AG04449 (cell line): ENCODE measurements at regions of chr17 and their contacts with region 1.

Region 1: GRCh38 chr17:7435221-7435675 is at the start of gene TMEM102:
- DNase-seq: peak; percentile 40
- H3K4me3 ChIP-seq: peak within 1 kb of the TSS; percentile 56
- CTCF ChIP-seq: no peak

Region 2: DNA sequence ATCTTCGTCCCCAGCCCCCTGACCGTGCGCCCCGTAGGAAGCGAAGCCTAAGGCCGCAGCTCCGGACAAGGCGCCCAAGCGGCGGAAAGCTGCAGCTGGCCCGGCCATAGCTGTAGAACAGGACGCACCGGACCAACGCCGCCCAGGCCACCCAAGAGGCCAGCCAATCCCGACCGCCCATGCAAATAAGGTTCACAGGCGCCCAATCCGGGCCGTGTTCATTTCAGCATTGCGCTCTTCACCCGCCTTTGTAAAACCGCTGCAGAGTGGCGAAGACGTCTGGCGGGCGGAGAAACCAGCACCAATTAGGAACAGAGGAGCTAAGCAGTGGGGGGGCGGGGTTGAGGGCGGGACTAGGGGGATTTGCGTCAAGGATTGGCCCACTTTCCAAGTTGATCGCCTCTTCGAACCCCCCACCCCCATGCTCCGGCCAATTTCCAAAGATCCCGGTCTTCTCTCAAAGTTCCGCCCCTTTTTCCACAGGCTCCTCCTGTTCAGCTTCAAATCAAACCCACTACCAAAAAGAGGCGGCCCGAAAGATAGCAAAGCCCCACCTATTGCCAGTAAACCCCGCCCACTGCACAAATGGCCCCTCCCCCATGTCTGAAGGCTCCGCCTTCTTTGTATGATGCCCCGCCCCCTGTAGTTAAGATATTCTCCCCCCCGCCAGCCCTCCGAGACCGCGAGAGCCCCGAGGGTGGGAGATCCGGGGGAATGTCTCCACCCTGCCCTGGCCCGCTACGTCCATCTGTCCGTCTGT is 31.1 kb before region 1 on chr17 and contains the start of gene TMEM256:
- CTCF ChIA-PET with region 1: interaction called, 12 read pairs
- POLR2A ChIA-PET with region 1: interaction called, 6 read pairs
- DNase-seq: peak; percentile 96
- H3K4me3 ChIP-seq: peak within 1 kb of the TSS; percentile 83
- CTCF ChIP-seq: no peak

Region 3: GRCh38 chr17:7419819-7420610 is 15.2 kb before region 1 on chr17 and contains the start of gene SPEM1:
- CTCF ChIA-PET with region 1: interaction called, 10 read pairs
- POLR2A ChIA-PET with region 1: no interaction called
- DNase-seq: no peak
- H3K4me3 ChIP-seq: no peak within 1 kb of the TSS
- CTCF ChIP-seq: no peak

Region 4: GRCh38 chr17:7478276-7479153 is 43.3 kb after region 1 on chr17:
- CTCF ChIA-PET with region 1: interaction called, 13 read pairs
- POLR2A ChIA-PET with region 1: interaction called, 19 read pairs
- DNase-seq: no peak
- H3K4me3 ChIP-seq: peak overlapping the region; percentile 72
- CTCF ChIP-seq: no peak

Region 5: DNA sequence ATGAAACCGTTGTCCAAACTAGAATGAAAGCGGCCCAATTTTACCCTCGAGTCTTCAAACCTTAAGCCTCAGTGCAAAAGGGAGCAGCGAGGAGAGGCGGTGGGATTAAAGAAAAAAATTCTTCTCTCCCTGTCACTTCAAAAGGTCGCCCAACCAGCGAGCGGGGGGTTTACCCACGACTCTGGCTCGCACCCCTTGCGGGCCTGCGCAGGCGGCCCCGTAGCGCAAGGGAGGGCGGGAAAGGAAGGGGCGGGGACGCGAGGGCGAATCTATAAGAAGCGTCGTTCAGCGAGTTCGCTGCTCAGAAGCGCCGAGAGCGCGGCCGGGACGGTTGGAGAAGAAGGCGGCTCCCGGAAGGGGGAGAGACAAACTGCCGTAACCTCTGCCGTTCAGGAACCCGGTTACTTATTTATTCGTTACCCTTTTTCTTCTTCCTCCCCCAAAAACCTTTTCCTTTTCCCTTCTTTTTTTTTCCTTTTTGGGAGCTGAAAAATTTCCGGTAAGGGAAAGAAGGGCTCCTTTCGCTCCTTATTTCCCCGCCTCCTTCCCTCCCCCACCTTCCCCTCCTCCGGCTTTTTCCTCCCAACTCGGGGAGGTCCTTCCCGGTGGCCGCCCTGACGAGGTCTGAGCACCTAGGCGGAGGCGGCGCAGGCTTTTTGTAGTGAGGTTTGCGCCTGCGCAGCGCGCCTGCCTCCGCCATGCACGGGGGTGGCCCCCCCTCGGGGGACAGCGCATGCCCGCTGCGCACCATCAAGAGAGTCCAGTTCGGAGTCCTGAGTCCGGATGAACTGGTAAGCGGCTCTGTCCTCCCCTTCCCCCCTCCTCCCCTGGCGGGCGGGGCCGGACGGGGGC is 49.0 kb after region 1 on chr17 and contains the start of gene POLR2A:
- CTCF ChIA-PET with region 1: interaction called, 8 read pairs
- POLR2A ChIA-PET with region 1: interaction called, 19 read pairs
- DNase-seq: peak; percentile 87
- H3K4me3 ChIP-seq: peak within 1 kb of the TSS; percentile 87
- CTCF ChIP-seq: no peak

Region 6: DNA sequence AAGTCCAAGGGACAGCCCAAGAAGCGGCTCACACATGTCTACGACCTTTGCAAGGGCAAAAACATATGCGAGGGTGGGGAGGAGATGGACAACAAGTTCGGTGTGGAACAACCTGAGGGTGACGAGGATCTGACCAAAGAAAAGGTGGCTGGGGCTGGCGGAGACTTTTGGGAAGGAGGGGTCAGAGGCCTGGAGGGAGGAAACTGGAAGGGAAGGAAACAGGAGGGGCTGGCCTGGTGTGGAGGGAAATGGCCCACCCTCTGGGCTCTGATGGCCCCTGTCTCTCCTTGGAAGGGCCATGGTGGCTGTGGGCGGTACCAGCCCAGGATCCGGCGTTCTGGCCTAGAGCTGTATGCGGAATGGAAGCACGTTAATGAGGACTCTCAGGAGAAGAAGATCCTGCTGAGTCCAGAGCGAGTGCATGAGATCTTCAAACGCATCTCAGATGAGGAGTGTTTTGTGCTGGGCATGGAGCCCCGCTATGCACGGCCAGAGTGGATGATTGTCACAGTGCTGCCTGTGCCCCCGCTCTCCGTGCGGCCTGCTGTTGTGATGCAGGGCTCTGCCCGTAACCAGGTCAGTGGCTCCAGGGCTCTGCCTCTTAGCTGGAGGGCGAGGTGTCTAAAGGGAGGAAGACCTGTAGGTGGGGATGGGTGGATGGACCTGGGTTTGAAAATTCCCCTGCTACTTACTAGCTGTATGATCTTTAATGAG is 61.4 kb after region 1 on chr17:
- CTCF ChIA-PET with region 1: no interaction called
- POLR2A ChIA-PET with region 1: no interaction called
- DNase-seq: no peak
- H3K4me3 ChIP-seq: no peak overlapping the region
- CTCF ChIP-seq: no peak

Region 7: DNA sequence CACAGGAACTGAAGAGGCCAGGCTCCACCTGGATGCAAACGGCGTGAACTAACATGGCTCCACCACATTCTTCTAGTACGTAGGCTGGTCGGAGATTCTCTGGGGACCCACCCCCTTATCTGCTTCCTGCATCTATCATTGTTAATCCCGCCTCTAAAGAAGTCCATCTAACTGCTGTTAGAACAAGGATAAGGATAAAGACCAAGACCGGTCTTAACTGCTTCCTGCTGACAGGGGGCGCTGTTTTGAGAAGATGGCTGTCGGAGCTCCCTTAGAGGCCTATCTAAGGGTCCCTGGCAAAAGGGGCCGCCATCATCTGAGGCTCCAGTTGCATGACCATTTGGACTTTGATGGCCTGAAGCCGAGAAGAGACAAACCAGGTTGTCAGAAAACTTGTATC is 87.8 kb after region 1 on chr17:
- CTCF ChIA-PET with region 1: no interaction called
- POLR2A ChIA-PET with region 1: no interaction called
- DNase-seq: no peak
- H3K4me3 ChIP-seq: no peak overlapping the region
- CTCF ChIP-seq: peak; percentile 2